Left cardiac atrium (tissue), 4 donors: ENCODE measurements at regions of chr11 and their contacts with region 1.

Region 1: GRCh38 chr11:128334311-128335044 is 252.9 kb downstream of the ETS1 start:
- DNase-seq: peak; percentile 60
- ATAC-seq: peak; percentile 62 to 73

Region 2: GRCh38 chr11:128299132-128299726 is 35.2 kb before region 1 on chr11:
- intact Hi-C with region 1: loop called in 1 of 2 experiments (anchors 5 kb)
- DNase-seq: no peak
- ATAC-seq: peak in 1 of 2 donors; percentile 51

Region 3: GRCh38 chr11:128624269-128625175 is 290.0 kb after region 1 on chr11:
- intact Hi-C with region 1: no loop called
- DNase-seq: no peak
- ATAC-seq: peak in 1 of 2 donors; percentile 54